ENCODE measurements at regions of chr11 and their contacts with region 1.

Region 1: DNA sequence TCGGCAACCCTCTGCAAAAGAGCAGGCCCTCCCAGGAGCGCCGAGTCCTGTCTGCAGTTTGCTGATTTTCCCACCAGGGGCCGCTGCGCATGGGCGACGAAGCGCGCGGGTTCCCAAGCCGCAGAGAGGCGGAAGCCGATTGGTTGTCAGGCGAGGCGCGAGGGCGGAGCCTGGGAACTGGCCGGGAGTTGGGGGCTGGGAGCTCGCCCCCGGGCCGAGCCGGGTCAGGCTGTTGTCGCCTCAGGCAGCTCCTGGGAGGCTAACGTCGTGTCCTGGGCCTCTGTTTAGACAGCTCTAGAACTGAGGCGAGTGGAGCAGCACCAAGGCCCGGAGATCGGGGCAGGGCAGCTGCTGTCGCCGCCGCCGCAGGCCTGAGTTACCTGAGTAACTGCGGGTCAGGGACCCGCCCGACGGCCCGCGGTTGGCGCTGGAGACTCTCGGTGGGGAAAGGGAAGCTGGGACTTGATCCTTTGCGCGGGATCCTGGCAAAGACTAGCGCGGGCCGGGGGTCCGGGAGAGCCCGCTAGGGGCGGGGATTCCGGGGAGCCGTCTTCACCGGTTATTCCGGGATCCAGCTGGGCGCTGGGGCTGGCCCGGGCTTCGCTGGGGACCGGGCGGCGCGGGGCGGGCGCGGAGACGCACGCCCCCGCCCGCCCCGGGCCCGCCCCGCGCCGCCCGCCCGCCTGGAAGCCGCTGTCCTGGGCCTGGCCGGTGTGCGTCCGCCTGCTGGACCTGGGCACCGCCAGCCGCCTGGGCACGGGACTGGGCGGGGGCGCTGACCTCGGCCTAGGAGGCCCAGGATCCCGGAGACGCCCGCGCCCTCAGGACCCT is at the start of gene STIM1:
- DNase-seq: peak; percentile 93 to 98
- H3K4me3 ChIP-seq: peak within 1 kb of the TSS; percentile 92
- H3K4me3 Mint-ChIP-seq: peak within 1 kb of the TSS; percentile 84
- H3K27ac Mint-ChIP-seq: peak within 1 kb of the TSS; percentile 69
- H3K4me1 ChIP-seq: peaks cover 15% of the 10 kb centered on the region
- H3K4me1 Mint-ChIP-seq: peaks cover 25% of the 10 kb centered on the region
- H3K27me3 ChIP-seq: no peaks in the 10 kb centered on the region
- H3K27me3 Mint-ChIP-seq: no peaks in the 10 kb centered on the region
- CTCF ChIP-seq: peak; percentile 93 to 94
- total RNA-seq, gene STIM1: 54.2 and 55.1 TPM in 2 replicates

Region 2: GRCh38 chr11:3087821-3088800 is 767.1 kb before region 1 on chr11:
- CTCF ChIA-PET with region 1: no interaction called
- POLR2A ChIA-PET with region 1: no interaction called
- intact Hi-C with region 1: no loop called
- DNase-seq: peak in 1 of 2 experiments; percentile 34
- H3K4me3 ChIP-seq: no peak overlapping the region
- H3K4me3 Mint-ChIP-seq: no peak overlapping the region
- H3K27ac Mint-ChIP-seq: no peak overlapping the region
- H3K4me1 ChIP-seq: no peaks in the 10 kb centered on the region
- H3K4me1 Mint-ChIP-seq: no peaks in the 10 kb centered on the region
- H3K27me3 ChIP-seq: no peaks in the 10 kb centered on the region
- H3K27me3 Mint-ChIP-seq: no peaks in the 10 kb centered on the region
- CTCF ChIP-seq: no peak

Region 3: DNA sequence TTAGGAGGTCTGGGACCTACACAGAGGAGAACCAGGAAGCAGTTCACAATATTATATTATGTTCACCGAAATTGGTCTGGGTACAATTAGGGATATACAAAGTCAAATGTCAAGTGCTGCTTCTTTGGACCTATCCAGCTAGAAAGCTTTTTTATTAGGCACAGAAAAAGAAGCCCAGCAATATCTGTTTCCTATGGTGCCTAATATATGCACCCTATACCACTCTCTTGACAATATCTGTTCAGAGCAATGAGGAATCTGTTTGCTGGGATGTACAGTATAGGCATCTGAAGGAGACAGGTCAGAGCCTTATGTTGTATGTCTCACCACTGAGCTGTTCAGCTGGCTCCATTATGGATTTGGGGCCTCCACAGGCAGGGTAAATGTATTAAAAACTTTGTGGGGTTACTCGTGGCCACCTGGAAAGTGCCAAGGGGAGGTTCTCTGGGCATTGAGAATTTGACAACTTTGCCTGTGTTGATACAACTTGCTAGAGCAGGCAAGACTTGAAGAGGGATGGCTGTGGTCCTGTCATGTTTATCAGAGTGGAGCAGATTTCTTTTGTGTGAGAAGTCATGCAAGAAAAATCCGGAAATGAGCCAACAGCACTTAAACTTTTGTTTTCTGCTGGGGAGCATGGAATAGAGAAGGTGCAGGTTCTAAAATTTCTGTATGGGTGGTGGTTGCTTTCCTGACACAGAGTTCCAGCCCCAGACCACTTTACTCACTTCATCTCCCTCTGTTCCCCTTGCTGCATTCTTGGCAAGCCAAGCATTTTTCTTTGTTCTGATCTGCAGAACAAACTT is 10.4 kb after region 1 on chr11:
- CTCF ChIA-PET with region 1: interaction called, 12 read pairs
- POLR2A ChIA-PET with region 1: interaction called, 3 read pairs
- intact Hi-C with region 1: loop called (anchors 1 kb)
- DNase-seq: no peak
- H3K4me3 ChIP-seq: no peak overlapping the region
- H3K4me3 Mint-ChIP-seq: peak overlapping the region; percentile 36
- H3K27ac Mint-ChIP-seq: peak overlapping the region; percentile 85
- H3K4me1 ChIP-seq: peaks cover 42% of the 10 kb centered on the region
- H3K4me1 Mint-ChIP-seq: peaks cover 34% of the 10 kb centered on the region
- H3K27me3 ChIP-seq: no peaks in the 10 kb centered on the region
- H3K27me3 Mint-ChIP-seq: no peaks in the 10 kb centered on the region
- CTCF ChIP-seq: no peak

Region 4: GRCh38 chr11:3905080-3905953 is 50.1 kb after region 1 on chr11:
- CTCF ChIA-PET with region 1: interaction called, 6 read pairs
- POLR2A ChIA-PET with region 1: interaction called, 7 read pairs
- intact Hi-C with region 1: loop called (anchors 1 kb)
- DNase-seq: peak; percentile 78 to 81
- H3K4me3 ChIP-seq: no peak overlapping the region
- H3K4me3 Mint-ChIP-seq: peak overlapping the region; percentile 60
- H3K27ac Mint-ChIP-seq: peak overlapping the region; percentile 96
- H3K4me1 ChIP-seq: peaks cover 43% of the 10 kb centered on the region
- H3K4me1 Mint-ChIP-seq: peaks cover 34% of the 10 kb centered on the region
- H3K27me3 ChIP-seq: no peaks in the 10 kb centered on the region
- H3K27me3 Mint-ChIP-seq: no peaks in the 10 kb centered on the region
- CTCF ChIP-seq: no peak

Region 5: GRCh38 chr11:3972431-3972830 is 117.2 kb after region 1 on chr11:
- CTCF ChIA-PET with region 1: interaction called, 11 read pairs
- POLR2A ChIA-PET with region 1: no interaction called
- intact Hi-C with region 1: no loop called
- DNase-seq: no peak
- H3K4me3 ChIP-seq: no peak overlapping the region
- H3K4me3 Mint-ChIP-seq: no peak overlapping the region
- H3K27ac Mint-ChIP-seq: no peak overlapping the region
- H3K4me1 ChIP-seq: peaks cover 3% of the 10 kb centered on the region; the same call in 1 of the 2 replicates
- H3K4me1 Mint-ChIP-seq: no peaks in the 10 kb centered on the region
- H3K27me3 ChIP-seq: no peaks in the 10 kb centered on the region
- H3K27me3 Mint-ChIP-seq: no peaks in the 10 kb centered on the region
- CTCF ChIP-seq: no peak

Region 6: GRCh38 chr11:4060182-4060923 is 205.2 kb after region 1 on chr11:
- CTCF ChIA-PET with region 1: interaction called, 10 read pairs
- POLR2A ChIA-PET with region 1: interaction called, 4 read pairs
- intact Hi-C with region 1: no loop called
- DNase-seq: peak; percentile 60 to 76
- H3K4me3 ChIP-seq: no peak overlapping the region
- H3K4me3 Mint-ChIP-seq: no peak overlapping the region
- H3K27ac Mint-ChIP-seq: peak overlapping the region; percentile 6
- H3K4me1 ChIP-seq: peaks cover 40% of the 10 kb centered on the region
- H3K4me1 Mint-ChIP-seq: peaks cover 42% of the 10 kb centered on the region
- H3K27me3 ChIP-seq: no peaks in the 10 kb centered on the region
- H3K27me3 Mint-ChIP-seq: no peaks in the 10 kb centered on the region
- CTCF ChIP-seq: no peak

Measured in Caco-2 (cell line).